ENCODE measurements at regions of chr1 and their contacts with region 1.

Region 1: GRCh38 chr1:32063261-32063681 is 9.5 kb upstream of the TMEM39B start:
- DNase-seq: no peak
- H3K4me3 ChIP-seq: no peak overlapping the region
- H3K27ac ChIP-seq: peak overlapping the region; percentile 15 to 31
- H3K4me1 ChIP-seq: peaks cover 5% of the 10 kb centered on the region
- H3K27me3 ChIP-seq: no peaks in the 10 kb centered on the region
- CTCF ChIP-seq: peak in 3 of 4 experiments; percentile 36 to 76 (median 67)
- POLR2A ChIP-seq: no peak

Region 2: DNA sequence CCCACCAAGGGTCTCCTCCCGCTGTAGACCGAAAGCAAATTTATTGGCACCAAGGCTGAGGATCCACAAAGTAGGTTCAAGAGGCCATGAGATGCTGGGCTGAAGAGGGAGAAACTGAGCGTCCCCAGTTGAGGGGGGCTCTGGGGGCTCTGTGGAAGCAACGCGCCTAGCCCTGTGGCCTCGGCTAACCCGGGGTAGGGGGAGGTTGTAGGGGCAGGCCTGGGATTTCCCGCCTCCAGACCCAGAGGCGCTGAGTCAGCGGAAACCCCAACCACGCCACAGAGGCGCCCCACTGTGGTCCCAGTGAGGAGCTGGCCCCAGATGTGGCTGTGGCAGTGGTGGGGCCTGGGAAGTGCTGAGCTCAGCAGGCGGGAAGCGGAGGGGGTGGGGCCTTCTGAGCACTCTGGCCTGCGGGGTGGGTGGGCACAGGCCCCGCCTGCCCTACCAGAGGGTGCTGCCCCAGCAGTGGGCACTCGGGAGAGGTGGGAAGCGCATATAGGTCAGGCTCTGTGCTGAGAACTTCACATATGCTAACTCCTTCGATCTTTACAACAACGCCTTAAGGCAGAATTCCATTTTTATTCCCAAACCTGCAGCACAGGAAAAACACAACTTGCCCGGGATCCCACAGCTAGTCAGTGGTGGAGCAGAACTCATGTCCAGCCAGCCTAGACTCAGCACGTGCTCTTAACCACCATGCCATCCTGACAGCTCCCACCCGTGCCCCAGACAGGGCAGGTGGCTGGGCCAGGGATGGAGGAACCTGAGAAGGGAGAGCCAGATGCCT is 358.0 kb before region 1 on chr1:
- intact Hi-C with region 1: no loop called
- DNase-seq: peak; percentile 19
- H3K4me3 ChIP-seq: no peak overlapping the region
- H3K27ac ChIP-seq: peak overlapping the region; percentile 73 to 84
- H3K4me1 ChIP-seq: peaks cover 16% of the 10 kb centered on the region
- H3K27me3 ChIP-seq: no peaks in the 10 kb centered on the region
- CTCF ChIP-seq: peak in 2 of 4 experiments; percentile 33 to 37
- POLR2A ChIP-seq: no peak

Region 3: GRCh38 chr1:31977385-31978131 is 85.7 kb before region 1 on chr1:
- intact Hi-C with region 1: loop called (anchors 5 kb)
- DNase-seq: no peak
- H3K4me3 ChIP-seq: no peak overlapping the region
- H3K27ac ChIP-seq: no peak overlapping the region
- H3K4me1 ChIP-seq: no peaks in the 10 kb centered on the region
- H3K27me3 ChIP-seq: no peaks in the 10 kb centered on the region
- CTCF ChIP-seq: peak in 1 of 4 experiments; percentile 42
- POLR2A ChIP-seq: no peak

Measured in prostate gland (tissue), 2 donors.